BJ (cell line): ENCODE measurements at regions of chr15 and their contacts with region 1.

Region 1: DNA sequence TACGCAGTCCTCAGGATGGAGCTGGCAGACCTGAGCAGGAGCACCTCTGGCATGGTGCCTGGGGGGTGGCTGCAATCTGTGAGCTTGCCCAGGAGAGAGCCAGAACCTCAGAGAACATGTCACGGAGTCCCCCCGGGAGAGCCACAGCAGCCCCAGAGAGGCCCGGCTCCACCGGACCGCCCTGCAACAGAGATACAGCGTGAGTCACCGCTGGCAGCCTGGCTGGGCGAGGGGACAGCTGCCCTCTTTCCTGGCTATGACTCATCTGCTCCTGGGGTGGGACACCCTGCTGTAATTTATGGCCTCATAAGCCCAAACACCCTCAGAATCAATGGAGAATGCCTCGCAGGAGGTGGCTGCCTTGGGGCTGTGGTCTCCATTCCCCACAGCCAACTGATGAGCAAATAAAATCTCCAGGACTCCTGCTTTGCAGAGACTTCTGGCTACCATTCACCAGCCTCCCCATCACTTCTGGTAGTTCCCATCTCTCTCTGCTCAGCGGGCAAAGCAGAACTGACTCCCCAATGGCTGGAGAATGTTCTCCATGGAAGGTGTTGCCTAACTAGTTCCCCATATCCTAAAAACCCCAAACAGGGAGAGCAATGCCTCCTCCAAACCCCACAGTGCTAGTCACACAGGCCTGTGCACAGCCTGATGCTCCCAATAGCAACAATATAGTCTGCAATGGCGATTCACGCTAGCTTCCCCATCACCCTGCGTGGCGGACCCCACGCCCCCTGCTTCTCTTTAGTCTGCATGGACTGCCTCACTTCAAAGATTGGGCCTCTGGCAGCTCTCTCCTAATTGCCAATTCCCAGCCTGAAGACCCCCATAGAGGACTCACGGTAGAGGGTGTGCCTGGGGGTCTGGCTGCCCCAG is 21.6 kb downstream of the ACSBG1 start:
- DNase-seq: peak; percentile 31
- H3K4me3 ChIP-seq: no peak overlapping the region
- H3K27me3 ChIP-seq: 0 out of 2 replicates have a peak, but pooled peaks cover 2% of the 10 kb centered on the region
- CTCF ChIP-seq: no peak

Region 2: DNA sequence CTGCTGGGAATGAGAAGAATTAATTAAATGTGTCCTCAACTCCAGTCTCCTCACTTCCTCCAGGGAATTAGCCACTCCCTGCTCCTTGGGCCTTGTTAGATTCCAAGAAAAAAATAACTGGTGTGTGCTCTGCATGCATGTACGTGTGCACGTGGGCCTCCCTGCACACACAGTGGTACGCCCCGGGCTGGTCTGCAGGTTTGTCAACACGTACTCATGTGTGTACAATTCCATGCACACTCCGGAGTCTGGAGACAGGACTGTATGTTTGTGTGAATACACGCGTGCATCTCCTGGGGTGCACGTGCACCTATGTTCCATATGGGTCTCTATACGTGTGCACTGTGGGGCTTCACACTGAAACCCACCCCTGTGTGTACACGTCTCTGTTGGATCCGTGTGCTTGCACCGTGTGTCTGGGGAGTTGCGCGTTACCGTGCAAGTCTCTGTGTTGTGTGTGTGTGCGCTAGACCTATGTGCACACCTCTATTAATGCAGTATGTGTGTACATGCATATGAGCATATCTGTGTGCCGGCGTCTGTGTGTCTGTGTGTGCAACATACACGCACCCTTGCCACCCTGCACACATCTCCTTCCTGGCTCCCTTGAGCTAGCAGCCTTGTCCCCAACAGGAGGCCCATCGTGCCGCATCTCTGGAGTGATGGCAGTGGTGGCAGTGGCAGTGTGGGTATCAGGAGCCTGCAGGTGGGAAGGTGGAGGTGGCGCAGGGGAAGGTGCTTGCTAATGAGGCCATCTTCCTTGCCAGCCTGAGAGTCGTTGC is 345.3 kb before region 1 on chr15:
- CTCF ChIA-PET with region 1: no interaction called
- POLR2A ChIA-PET with region 1: interaction called, 10 read pairs
- DNase-seq: no peak
- H3K4me3 ChIP-seq: no peak overlapping the region
- H3K27me3 ChIP-seq: no peaks in the 10 kb centered on the region
- CTCF ChIP-seq: no peak

Region 3: DNA sequence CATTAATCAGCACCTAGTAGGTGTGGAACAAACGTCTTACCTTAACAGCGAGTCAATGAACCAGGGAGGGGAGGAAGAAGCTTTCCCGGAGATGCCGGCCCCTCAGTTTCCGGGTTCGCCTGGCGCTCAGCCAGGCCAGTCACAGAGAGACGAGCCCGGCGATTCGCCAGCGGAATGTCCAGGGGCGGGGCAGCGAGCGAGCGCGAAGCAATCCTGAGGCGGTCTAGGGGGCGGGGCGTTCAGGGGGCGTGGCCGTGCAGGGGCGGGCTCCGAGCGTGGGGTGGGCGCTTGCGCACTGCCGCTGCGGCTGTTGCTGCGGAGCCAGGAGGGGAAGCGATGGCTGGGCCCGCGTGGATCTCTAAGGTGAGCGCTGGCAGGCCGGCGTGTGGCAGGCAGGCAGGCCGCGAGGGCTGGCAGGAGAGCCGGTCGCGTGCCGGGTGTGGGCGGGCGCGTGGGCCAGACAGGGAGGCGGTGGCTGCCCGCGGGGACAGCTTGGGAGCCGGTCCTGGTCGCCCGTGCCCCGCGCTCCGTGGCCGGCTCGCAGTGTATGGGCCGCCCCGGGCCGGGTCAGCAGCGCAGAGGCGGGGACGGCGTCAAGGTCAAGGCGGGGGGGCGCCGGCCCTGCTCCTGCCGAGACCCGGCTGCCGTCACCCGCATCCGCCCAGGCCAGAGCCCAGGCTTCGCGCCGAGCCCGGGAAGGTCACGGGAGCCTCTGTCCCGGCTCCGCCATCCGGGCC is 63.5 kb before region 1 on chr15 and contains the start of gene IDH3A:
- CTCF ChIA-PET with region 1: no interaction called
- POLR2A ChIA-PET with region 1: interaction called, 14 read pairs
- DNase-seq: peak; percentile 59
- H3K4me3 ChIP-seq: peak within 1 kb of the TSS; percentile 63
- H3K27me3 ChIP-seq: no peaks in the 10 kb centered on the region
- CTCF ChIP-seq: no peak
- polyA plus RNA-seq, gene IDH3A: 49.3 and 76.1 TPM in 2 replicates

Region 4: DNA sequence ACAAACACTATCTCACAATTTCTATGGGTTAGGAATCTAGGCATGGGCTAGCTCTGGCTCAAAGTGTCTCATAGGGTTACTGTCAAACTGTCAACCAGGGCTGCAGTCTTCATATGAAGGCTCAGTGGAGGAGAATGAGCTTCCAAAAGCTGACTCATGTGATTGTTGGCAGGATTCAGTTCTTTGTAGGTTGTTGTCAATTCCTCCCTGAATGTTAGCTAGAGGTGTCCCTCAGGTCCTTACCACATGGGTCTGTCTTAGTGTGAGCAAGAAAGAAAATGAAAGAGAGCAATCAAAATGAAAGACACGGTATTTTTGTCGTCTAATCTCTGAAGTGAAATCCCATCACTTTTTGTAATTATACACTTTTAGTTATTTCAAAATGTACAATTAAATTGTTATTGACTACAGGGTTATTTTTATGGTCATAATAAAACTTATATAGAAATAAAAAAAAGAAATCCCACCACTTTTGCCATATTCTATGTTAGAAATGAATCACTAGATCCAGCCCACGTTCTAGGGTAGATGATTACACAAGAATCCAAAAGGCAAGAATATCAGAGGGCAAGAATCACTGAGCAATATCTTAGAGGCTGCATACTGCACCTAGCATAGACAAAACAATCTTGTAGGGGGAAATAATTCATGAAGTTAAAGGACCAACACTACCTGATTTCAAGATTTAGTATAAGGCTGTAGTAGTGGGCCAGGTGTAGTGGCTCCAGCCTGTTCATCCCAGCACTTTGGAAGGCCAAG is 13.2 kb after region 1 on chr15:
- CTCF ChIA-PET with region 1: no interaction called
- POLR2A ChIA-PET with region 1: no interaction called
- DNase-seq: no peak
- H3K4me3 ChIP-seq: no peak overlapping the region
- H3K27me3 ChIP-seq: peaks cover 4% of the 10 kb centered on the region
- CTCF ChIP-seq: no peak